Stomach (tissue), 19 donors: ENCODE measurements at regions of chr10 and their contacts with region 1.

Region 1: DNA sequence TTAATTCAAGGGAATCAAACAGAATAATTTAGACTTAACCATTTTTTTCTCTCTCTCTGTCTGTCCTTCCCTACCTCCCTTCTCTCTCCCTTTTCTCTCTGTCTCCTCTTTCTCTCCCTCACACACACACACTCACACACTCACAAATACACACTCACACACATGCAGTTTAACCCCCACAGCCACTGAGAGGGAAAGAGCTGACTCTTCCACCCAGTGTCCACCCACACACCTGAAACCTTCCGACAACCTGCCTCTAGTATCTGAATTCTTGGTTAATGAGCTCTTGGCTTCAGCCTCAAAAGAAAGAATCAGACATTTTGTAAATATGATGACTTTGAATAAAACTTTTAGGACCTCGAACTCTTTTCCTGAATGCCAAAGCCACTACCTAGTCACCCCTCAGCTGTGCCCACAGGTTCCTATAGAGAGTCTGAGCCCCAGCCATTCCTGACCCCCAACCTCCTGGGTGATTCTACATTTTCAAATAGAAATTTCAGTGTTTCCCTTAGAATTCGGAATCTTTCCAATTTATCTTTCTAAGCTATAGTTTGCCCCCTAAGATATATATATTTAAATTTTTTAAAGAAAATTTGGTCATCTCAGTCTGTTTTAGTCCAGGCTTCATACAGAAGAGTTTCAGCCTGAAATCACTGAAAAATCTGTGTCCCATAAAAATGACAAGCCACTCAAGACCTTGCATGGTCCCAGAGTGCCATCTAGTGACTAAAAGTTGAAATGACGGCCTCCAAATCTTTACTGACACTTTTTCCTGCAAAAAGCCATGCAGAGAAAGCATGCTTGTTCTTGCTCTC is 202.8 kb downstream of the IPMK start:
- DNase-seq: peak in 1 of 2 donors; percentile 59
- H3K4me3 ChIP-seq: no peak overlapping the region
- H3K27ac ChIP-seq: no peak overlapping the region
- H3K4me1 ChIP-seq: peaks cover 0 to 6% (median 0%) of the 10 kb centered on the region in 4 donors
- H3K27me3 ChIP-seq: no peaks in the 10 kb centered on the region
- CTCF ChIP-seq: peak in 5 of 7 experiments; percentile 18 to 53 (median 38)
- EP300 ChIP-seq: no peak
- POLR2A ChIP-seq: no peak

Region 2: GRCh38 chr10:57341294-57341693 is 723.6 kb before region 1 on chr10:
- intact Hi-C with region 1: loop called (anchors 10 kb)
- DNase-seq: no peak
- H3K4me3 ChIP-seq: no peak overlapping the region
- H3K27ac ChIP-seq: no peak overlapping the region
- H3K4me1 ChIP-seq: no peaks in the 10 kb centered on the region
- H3K27me3 ChIP-seq: peaks cover 0 to 4% (median 0%) of the 10 kb centered on the region in 3 donors
- CTCF ChIP-seq: no peak
- EP300 ChIP-seq: no peak
- POLR2A ChIP-seq: no peak